Psoas muscle (tissue), 8 donors: ENCODE measurements at regions of chr13 and their contacts with region 1.

Region 1: DNA sequence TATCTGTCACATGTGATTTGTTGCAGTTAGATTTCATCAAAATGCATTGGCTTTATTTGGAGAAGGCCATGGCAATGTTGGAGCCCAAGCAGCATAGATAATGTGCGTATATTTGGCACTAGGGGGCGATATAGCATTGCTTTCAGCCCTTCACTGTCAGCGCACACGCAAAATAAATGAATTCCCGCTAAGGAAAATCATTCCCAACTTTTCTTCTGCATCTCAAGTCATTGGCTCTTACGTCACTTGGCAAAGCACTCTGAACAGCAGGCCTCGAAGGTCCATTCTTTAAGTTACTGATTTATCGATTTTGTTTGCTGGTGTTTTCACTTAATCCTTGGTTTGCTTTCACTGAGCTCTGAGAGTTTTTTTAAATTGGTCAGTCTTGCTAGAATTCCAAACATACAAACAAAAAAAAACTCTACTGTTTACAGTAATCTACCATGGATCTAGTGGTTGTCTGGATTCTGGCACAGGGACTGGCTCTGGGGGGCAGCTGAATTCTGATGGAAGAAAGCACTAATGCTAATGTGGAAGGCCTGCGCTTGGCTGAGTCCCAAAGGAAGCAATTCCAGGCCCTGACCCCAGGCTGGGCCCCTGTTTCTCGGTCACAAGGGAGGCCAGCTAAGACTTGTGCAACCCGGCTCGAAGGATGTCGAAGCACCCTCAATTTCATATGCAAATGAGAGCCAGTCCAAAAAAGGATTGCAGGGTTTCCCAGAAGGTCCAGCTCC is 97.7 kb upstream of the IPO5 start:
- DNase-seq: peak; percentile 46 to 80
- ATAC-seq: peak; percentile 56 to 91 (median 77)
- H3K4me3 ChIP-seq: no peak overlapping the region
- H3K27ac ChIP-seq: no peak overlapping the region
- H3K4me1 ChIP-seq: no peaks in the 10 kb centered on the region
- H3K27me3 ChIP-seq: no peaks in the 10 kb centered on the region
- CTCF ChIP-seq: peak; percentile 82

Region 2: DNA sequence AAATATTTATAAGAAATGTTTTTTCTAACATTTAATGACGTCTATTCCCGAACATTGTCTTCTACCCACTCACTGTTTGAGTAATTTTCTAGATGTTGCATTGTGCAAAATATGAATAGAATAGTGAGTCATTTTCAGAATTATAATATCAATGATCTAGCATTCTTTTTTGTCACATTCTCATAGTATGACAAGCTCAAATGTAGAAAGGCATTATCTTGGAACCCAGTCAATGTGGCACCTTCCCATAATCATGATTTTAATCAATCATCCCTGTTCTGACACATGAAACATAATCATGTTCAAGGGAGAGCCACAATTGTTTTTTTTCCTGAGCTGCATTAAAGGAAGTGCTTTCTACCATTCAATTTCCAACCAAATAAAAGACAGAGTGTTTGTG is 1127.3 kb before region 1 on chr13:
- intact Hi-C with region 1: no loop called
- DNase-seq: no peak
- ATAC-seq: no peak
- H3K4me3 ChIP-seq: no peak overlapping the region
- H3K27ac ChIP-seq: no peak overlapping the region
- H3K4me1 ChIP-seq: no peaks in the 10 kb centered on the region
- H3K27me3 ChIP-seq: no peaks in the 10 kb centered on the region
- CTCF ChIP-seq: no peak

Region 3: DNA sequence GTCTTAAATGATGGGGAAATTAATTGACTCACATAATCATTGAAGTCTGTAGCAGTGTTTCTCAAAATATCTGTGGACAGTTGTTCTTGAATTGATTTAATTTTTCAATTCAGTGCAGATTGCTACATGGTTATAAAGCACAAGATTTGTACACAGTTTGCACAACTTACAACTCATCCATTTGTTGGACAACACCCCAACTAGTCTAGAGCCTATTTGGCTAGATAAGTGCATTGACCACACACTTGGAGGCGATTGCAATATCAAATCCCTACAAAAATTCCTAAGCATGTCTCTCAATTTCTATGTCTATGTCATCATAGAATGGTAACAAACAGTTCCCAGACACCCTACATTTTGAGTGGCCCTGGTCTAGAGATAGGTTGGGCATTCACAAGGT is 49.8 kb after region 1 on chr13:
- intact Hi-C with region 1: loop called in 1 of 2 experiments (anchors 5 kb)
- DNase-seq: no peak
- ATAC-seq: peak in 1 of 4 donors; percentile 27
- H3K4me3 ChIP-seq: no peak overlapping the region
- H3K27ac ChIP-seq: no peak overlapping the region
- H3K4me1 ChIP-seq: no peaks in the 10 kb centered on the region
- H3K27me3 ChIP-seq: no peaks in the 10 kb centered on the region
- CTCF ChIP-seq: no peak

Region 4: GRCh38 chr13:97975848-97976609 is 120.3 kb after region 1 on chr13:
- intact Hi-C with region 1: loop called in 1 of 2 experiments (anchors 5 kb)
- DNase-seq: peak; percentile 93 to 94
- ATAC-seq: peak; percentile 97 to 99 (median 99)
- H3K4me3 ChIP-seq: peak overlapping the region; percentile 90
- H3K27ac ChIP-seq: peak overlapping the region; percentile 91
- H3K4me1 ChIP-seq: peaks cover 35% of the 10 kb centered on the region
- H3K27me3 ChIP-seq: no peaks in the 10 kb centered on the region
- CTCF ChIP-seq: no peak

Region 5: GRCh38 chr13:98672944-98673545 is 817.3 kb after region 1 on chr13:
- intact Hi-C with region 1: loop called in 1 of 2 experiments (anchors 10 kb)
- DNase-seq: peak; percentile 66 to 83
- ATAC-seq: peak; percentile 80 to 97 (median 92)
- H3K4me3 ChIP-seq: no peak overlapping the region
- H3K27ac ChIP-seq: no peak overlapping the region
- H3K4me1 ChIP-seq: no peaks in the 10 kb centered on the region
- H3K27me3 ChIP-seq: peaks cover 0 to 1% (median 0%) of the 10 kb centered on the region in 3 donors
- CTCF ChIP-seq: peak; percentile 91

Region 6: DNA sequence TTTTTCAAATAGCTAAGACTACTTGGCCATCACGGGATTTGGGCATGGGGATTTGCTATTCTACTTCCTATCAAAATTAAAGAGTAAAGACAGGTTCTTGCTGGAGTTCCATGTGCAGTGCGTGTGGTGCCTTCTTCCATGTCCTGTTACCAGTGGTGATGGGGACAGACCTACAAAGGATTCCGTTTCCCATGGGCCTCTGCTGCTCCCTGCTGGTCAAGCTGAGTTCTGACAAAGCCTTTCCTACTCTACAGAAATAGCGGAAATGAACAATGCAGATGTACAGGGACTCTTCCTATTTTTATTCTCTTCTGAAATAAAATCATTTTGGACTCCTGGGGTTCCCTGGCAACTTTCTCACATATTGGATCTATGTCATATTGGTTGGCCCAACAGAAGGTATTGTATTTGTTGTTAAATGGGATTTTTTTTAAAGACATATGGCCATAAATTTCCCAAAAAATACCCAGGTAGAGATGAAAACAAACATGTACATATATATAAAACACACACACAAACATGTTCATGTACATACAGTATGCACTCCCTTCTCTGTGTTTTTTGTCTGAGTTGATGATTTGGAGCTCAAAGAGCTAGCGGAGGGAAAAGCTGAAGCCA is 987.2 kb after region 1 on chr13:
- intact Hi-C with region 1: loop called in 1 of 2 experiments (anchors 5 kb)
- DNase-seq: peak; percentile 60 to 82
- ATAC-seq: peak; percentile 71 to 85 (median 75)
- H3K4me3 ChIP-seq: no peak overlapping the region
- H3K27ac ChIP-seq: no peak overlapping the region
- H3K4me1 ChIP-seq: no peaks in the 10 kb centered on the region
- H3K27me3 ChIP-seq: no peaks in the 10 kb centered on the region
- CTCF ChIP-seq: peak; percentile 75